ENCODE measurements at regions of chr1 and their contacts with region 1.

Region 1: DNA sequence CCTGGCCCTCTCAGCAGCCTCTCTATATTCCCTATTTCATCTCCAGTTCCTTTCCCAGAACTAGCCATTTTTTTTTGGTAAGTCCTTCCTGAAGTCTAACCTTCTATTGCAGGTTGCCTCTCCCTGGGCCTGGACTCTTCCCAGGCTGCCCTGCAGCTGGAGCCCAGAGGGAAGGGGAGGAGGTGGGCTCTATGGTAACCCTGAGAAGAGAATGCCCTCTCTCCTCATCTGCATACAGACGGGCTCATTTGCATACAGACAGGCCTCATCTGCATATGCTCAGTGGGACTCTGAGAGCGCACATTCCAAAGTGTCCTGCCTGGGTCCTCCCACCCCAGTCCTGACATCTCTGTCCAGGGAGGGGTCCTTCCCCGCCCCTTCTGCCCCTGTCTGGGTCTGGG is 32.7 kb downstream of the RHBG start:
- DNase-seq: no peak
- H3K4me3 ChIP-seq: no peak overlapping the region
- H3K27ac ChIP-seq: no peak overlapping the region
- H3K4me1 ChIP-seq: no peaks in the 10 kb centered on the region
- H3K27me3 ChIP-seq: peaks cover 15% of the 10 kb centered on the region
- CTCF ChIP-seq: no peak

Region 2: DNA sequence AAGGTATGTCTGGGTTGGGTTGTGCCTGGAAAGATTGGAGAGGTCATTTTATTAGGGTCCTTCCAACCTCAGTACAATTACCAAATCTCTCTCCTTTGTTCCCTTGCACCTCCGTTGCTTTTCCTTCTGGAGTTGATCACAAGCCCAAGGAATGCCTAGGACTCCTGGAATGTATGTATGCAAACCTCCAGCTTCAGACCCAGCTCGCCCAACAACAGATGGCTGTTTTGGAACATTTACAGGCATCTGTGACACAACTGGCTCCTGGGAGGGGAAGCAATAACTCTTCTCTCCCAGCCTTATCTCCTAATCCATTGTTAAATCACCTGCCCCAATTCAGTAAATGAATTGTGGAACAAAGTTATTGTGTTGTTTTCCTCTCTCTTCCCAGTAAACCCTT is 55.0 kb before region 1 on chr1:
- CTCF ChIA-PET with region 1: no interaction called
- POLR2A ChIA-PET with region 1: no interaction called
- intact Hi-C with region 1: no loop called
- DNase-seq: no peak
- H3K4me3 ChIP-seq: no peak overlapping the region
- H3K27ac ChIP-seq: no peak overlapping the region
- H3K4me1 ChIP-seq: no peaks in the 10 kb centered on the region
- H3K27me3 ChIP-seq: no peaks in the 10 kb centered on the region
- CTCF ChIP-seq: no peak

Region 3: GRCh38 chr1:156421062-156421938 is 19.6 kb after region 1 on chr1:
- CTCF ChIA-PET with region 1: interaction called, 3 read pairs
- POLR2A ChIA-PET with region 1: no interaction called
- intact Hi-C with region 1: loop called (anchors 2 kb)
- DNase-seq: peak; percentile 86
- H3K4me3 ChIP-seq: peak overlapping the region; percentile 38
- H3K27ac ChIP-seq: no peak overlapping the region
- H3K4me1 ChIP-seq: peaks cover 14% of the 10 kb centered on the region
- H3K27me3 ChIP-seq: peaks cover 86% of the 10 kb centered on the region
- CTCF ChIP-seq: no peak